Colonic mucosa (tissue), 4 donors: ENCODE measurements at regions of chr12 and their contacts with region 1.

Region 1: GRCh38 chr12:130335517-130336392 is 1.9 kb upstream of the PIWIL1 start:
- DNase-seq: peak; percentile 62
- H3K4me3 ChIP-seq: no peak overlapping the region
- H3K27ac ChIP-seq: no peak overlapping the region
- H3K4me1 ChIP-seq: no peaks in the 10 kb centered on the region
- H3K27me3 ChIP-seq: no peaks in the 10 kb centered on the region
- CTCF ChIP-seq: peak; percentile 78

Region 2: DNA sequence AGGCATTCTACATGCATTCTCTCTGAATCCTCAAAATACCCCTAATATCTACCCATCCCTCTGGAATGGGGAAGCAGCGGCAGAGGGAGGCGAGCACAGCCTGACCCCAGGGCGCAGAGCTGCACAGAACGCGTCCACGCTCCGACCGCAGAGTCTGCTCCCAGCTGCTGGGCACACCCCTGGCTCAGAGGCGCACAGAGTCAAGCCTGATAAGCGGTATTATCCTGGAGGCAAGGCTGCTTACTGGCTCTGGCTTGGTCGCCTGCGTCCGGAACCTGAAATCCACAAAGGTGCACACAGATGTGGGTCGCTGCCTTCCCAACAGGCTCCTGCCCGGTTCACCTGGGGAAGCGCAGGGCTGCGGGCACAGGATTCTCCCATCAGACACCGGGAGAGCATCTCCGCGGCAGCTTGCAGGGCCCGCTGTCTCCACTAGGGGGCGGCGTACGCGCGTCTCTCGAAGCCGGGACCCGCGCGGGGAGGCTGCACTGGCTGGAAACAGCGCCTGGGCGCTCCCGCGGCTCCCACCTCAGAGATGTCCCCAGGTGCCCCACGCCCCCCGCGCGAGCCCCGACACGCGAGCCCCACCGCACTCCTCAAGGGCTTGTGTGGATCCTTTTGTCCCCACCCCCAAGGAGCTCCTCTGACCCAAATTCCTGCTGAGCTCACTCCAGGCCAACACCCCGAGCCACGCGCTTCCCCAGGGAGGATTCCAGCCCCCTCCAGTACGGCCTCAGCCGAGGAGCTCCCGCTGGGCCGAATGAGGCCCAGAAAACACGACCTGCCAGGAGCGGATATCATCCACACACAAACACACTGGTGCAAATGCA is 293.6 kb before region 1 on chr12:
- intact Hi-C with region 1: loop called (anchors 2 kb)
- DNase-seq: peak; percentile 24
- H3K4me3 ChIP-seq: no peak overlapping the region
- H3K27ac ChIP-seq: no peak overlapping the region
- H3K4me1 ChIP-seq: no peaks in the 10 kb centered on the region
- H3K27me3 ChIP-seq: peaks cover 14% of the 10 kb centered on the region
- CTCF ChIP-seq: peak; percentile 58

Region 3: DNA sequence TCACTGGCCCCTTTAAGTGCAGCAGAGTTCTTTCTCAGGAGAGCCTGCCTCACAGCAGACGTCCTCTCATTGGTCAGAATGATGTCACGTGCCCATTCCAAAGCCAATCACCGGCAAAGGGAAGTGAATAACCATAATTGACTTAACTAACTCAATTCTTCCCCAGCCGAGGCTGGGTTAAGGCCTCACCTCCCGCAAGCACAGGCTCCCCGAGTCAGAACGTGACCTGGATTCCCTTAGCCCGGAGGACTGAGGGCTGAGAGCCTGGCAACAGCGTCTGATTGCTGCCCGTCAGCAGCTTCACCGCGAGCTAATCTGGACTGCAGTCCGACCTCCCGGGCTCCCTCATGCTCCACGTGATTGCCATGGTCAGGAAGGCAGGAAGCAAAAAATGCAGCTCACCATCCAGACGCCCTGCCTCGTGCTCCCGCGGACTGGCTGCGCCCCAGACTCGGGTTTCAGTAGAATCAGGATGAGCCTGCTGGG is 265.6 kb before region 1 on chr12:
- intact Hi-C with region 1: no loop called
- DNase-seq: no peak
- H3K4me3 ChIP-seq: no peak overlapping the region
- H3K27ac ChIP-seq: no peak overlapping the region
- H3K4me1 ChIP-seq: no peaks in the 10 kb centered on the region
- H3K27me3 ChIP-seq: no peaks in the 10 kb centered on the region
- CTCF ChIP-seq: no peak

Region 4: GRCh38 chr12:130375296-130376287 is 39.8 kb after region 1 on chr12:
- intact Hi-C with region 1: no loop called
- DNase-seq: no peak
- H3K4me3 ChIP-seq: no peak overlapping the region
- H3K27ac ChIP-seq: no peak overlapping the region
- H3K4me1 ChIP-seq: no peaks in the 10 kb centered on the region
- H3K27me3 ChIP-seq: no peaks in the 10 kb centered on the region
- CTCF ChIP-seq: no peak

Region 5: GRCh38 chr12:130728158-130729058 is 392.7 kb after region 1 on chr12:
- intact Hi-C with region 1: no loop called
- DNase-seq: no peak
- H3K4me3 ChIP-seq: no peak overlapping the region
- H3K27ac ChIP-seq: no peak overlapping the region
- H3K4me1 ChIP-seq: no peaks in the 10 kb centered on the region
- H3K27me3 ChIP-seq: no peaks in the 10 kb centered on the region
- CTCF ChIP-seq: no peak